ENCODE measurements at regions of chr6 and their contacts with region 1.

Region 1: GRCh38 chr6:134358320-134358719 is 40.4 kb upstream of the SGK1 start:
- DNase-seq: peak in 2 of 3 donors; percentile 15 to 27
- H3K4me3 ChIP-seq: no peak overlapping the region
- H3K4me3 Mint-ChIP-seq: no peak overlapping the region
- H3K27ac ChIP-seq: peak overlapping the region in 1 of 2 donors; percentile 67
- H3K27ac Mint-ChIP-seq: peak overlapping the region; percentile 48 to 83 (median 72)
- H3K4me1 ChIP-seq: peaks cover 10 to 18% of the 10 kb centered on the region in 2 donors
- H3K4me1 Mint-ChIP-seq: peaks cover 33% of the 10 kb centered on the region
- H3K27me3 ChIP-seq: no peaks in the 10 kb centered on the region
- H3K27me3 Mint-ChIP-seq: peaks cover 0 to 2% (median 1%) of the 10 kb centered on the region in 3 donors
- CTCF ChIP-seq: no peak

Region 2: GRCh38 chr6:134317471-134318131 is 40.7 kb before region 1 on chr6 and contains the start of gene SGK1:
- intact Hi-C with region 1: loop called in 1 of 2 experiments (anchors 5 kb)
- DNase-seq: peak in 1 of 3 donors; percentile 16
- H3K4me3 ChIP-seq: peak within 1 kb of the TSS; percentile 40 to 78 (median 68)
- H3K4me3 Mint-ChIP-seq: peak within 1 kb of the TSS; percentile 91 to 99
- H3K27ac ChIP-seq: no peak within 1 kb of the TSS
- H3K27ac Mint-ChIP-seq: peak within 1 kb of the TSS in 6 of 7 donors; percentile 12 to 70 (median 48)
- H3K4me1 ChIP-seq: peaks cover 8 to 15% of the 10 kb centered on the region in 2 donors
- H3K4me1 Mint-ChIP-seq: peaks cover 15% of the 10 kb centered on the region
- H3K27me3 ChIP-seq: peaks cover 26 to 32% of the 10 kb centered on the region in 2 donors
- H3K27me3 Mint-ChIP-seq: peaks cover 39 to 46% (median 41%) of the 10 kb centered on the region in 3 donors
- CTCF ChIP-seq: no peak
- polyA plus RNA-seq, gene SGK1: 373 to 419 (median 407) TPM

Region 3: DNA sequence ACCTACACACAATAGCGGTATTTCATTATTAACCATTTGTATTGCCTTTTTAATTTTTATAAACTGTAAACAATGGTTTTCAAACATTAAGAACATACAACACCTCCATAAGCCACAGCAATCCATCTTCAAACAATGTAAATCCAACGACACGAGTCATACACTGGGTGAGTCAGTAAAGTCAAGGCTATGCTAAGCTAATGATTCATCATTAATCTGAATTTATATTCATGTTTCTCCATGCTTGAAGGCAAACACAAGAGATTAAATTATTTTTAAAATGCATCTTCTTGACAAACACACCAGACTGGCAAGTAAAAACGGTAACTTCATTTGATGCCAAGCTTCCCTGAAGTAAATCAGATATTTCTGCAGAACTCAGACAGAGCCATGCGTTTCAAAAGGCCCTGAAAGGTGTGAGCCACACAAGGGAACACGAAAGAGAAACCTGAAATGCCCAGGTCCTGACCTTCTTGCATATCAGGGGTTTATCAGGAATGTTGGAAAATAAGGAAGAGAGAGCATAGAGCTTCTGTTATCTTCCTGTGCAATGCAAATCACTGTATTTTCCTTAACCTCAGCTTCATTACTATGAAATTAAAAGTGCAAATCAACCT is 429.0 kb after region 1 on chr6:
- intact Hi-C with region 1: no loop called
- DNase-seq: peak in 1 of 3 donors; percentile 11
- H3K4me3 ChIP-seq: no peak overlapping the region
- H3K4me3 Mint-ChIP-seq: no peak overlapping the region
- H3K27ac ChIP-seq: no peak overlapping the region
- H3K27ac Mint-ChIP-seq: no peak overlapping the region
- H3K4me1 ChIP-seq: no peaks in the 10 kb centered on the region
- H3K4me1 Mint-ChIP-seq: no peaks in the 10 kb centered on the region
- H3K27me3 ChIP-seq: no peaks in the 10 kb centered on the region
- H3K27me3 Mint-ChIP-seq: peaks cover 1 to 7% (median 2%) of the 10 kb centered on the region in 3 donors
- CTCF ChIP-seq: no peak